Endothelial cell of umbilical vein (primary cell): ENCODE measurements at regions of chr1 and their contacts with region 1.

Region 1: GRCh38 chr1:46247436-46248121 is at the start of gene RAD54L:
- DNase-seq: peak; percentile 97
- H3K4me3 ChIP-seq: peak within 1 kb of the TSS; percentile 75 to 92 (median 82)
- H3K27ac ChIP-seq: peak within 1 kb of the TSS; percentile 48
- H3K4me1 ChIP-seq: peaks cover 20% of the 10 kb centered on the region
- H3K27me3 ChIP-seq: no peaks in the 10 kb centered on the region
- CTCF ChIP-seq: no peak
- POLR2A ChIP-seq: peak; percentile 42
- total RNA-seq, gene RAD54L: 18.9 and 19.7 TPM in 2 replicates

Region 2: GRCh38 chr1:46236882-46237281 is 10.7 kb before region 1 on chr1:
- CTCF ChIA-PET with region 1: interaction called, 14 read pairs
- POLR2A ChIA-PET with region 1: no interaction called
- dilution Hi-C with region 1: no loop called
- intact Hi-C with region 1: no loop called
- DNase-seq: no peak
- H3K4me3 ChIP-seq: no peak overlapping the region
- H3K27ac ChIP-seq: no peak overlapping the region
- H3K4me1 ChIP-seq: no peaks in the 10 kb centered on the region
- H3K27me3 ChIP-seq: no peaks in the 10 kb centered on the region
- CTCF ChIP-seq: no peak
- POLR2A ChIP-seq: no peak

Region 3: GRCh38 chr1:46303038-46303871 is 55.7 kb after region 1 on chr1 and contains the starts of genes LRRC41 and UQCRH:
- CTCF ChIA-PET with region 1: interaction called, 7 read pairs
- POLR2A ChIA-PET with region 1: no interaction called
- dilution Hi-C with region 1: no loop called
- intact Hi-C with region 1: loop called (anchors 2 kb)
- DNase-seq: peak; percentile 96
- H3K4me3 ChIP-seq: peak within 1 kb of the TSS; percentile 81 to 94 (median 84)
- H3K27ac ChIP-seq: peak within 1 kb of the TSS; percentile 81
- H3K4me1 ChIP-seq: peaks cover 20% of the 10 kb centered on the region
- H3K27me3 ChIP-seq: no peaks in the 10 kb centered on the region
- CTCF ChIP-seq: peak; percentile 4 to 11
- POLR2A ChIP-seq: peak; percentile 75
- total RNA-seq, gene LRRC41: 69.2 and 71.5 TPM in 2 replicates
- total RNA-seq, gene UQCRH: 253 and 266 TPM in 2 replicates

Region 4: GRCh38 chr1:46340404-46341221 is 93.0 kb after region 1 on chr1 and contains the start of gene NSUN4:
- CTCF ChIA-PET with region 1: interaction called, 47 read pairs
- POLR2A ChIA-PET with region 1: no interaction called
- dilution Hi-C with region 1: no loop called
- intact Hi-C with region 1: loop called (anchors 1 kb)
- DNase-seq: peak; percentile 92
- H3K4me3 ChIP-seq: peak within 1 kb of the TSS; percentile 70 to 91 (median 89)
- H3K27ac ChIP-seq: peak within 1 kb of the TSS; percentile 88
- H3K4me1 ChIP-seq: peaks cover 10% of the 10 kb centered on the region
- H3K27me3 ChIP-seq: no peaks in the 10 kb centered on the region
- CTCF ChIP-seq: peak; percentile 69 to 79
- POLR2A ChIP-seq: peak; percentile 84
- total RNA-seq, gene NSUN4: 21.6 and 22.4 TPM in 2 replicates